ENCODE measurements at regions of chr18 and their contacts with region 1.

Region 1: DNA sequence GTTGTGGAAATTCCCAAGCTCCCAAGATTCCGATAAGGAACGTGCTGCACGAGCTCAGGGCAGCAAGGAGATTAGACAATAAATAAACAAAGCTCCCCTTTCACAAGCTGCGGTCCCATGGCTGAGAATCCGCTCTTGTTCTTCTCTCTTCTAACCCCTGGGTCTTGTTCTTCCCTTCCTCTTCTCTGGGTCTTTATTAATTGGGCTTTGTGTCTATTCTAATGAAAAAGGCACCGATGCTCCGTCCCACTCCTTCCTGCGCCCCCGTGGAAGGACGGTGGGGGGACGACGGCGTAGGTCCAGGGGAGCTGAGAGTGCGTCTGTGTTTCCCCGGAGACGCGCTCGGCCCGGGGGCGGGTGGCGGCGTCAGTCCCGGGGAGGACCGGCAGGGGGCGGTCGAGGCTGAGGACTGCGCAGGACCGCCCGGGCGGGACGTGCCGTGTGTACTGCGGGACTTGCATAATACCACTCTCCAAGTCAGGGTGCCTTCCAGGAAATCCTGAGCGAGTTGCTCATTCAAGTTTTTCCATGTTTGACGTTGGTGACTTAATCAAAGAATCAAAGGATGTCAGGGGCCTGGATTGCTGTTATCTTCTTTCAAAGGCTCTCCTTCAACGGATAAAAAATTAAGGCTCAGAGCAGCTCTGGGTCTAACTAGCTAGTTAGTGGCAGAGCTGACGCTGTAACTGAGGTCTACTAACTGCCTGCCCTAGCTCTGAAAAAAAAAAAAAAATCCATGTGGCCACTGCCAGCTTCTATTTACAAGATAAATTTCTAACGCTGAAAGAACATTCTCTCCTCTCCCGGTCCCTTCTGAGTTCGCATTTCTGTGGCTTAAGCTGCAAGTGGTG is 321.4 kb downstream of the TGIF1 start:
- DNase-seq: peak; percentile 83
- ATAC-seq: peak; percentile 100
- H3K4me3 Mint-ChIP-seq: peak overlapping the region; percentile 40
- H3K27ac Mint-ChIP-seq: peak overlapping the region; percentile 22
- H3K4me1 Mint-ChIP-seq: peaks cover 4% of the 10 kb centered on the region
- H3K27me3 Mint-ChIP-seq: peaks cover 44% of the 10 kb centered on the region

Region 2: GRCh38 chr18:3782901-3783300 is 11.6 kb after region 1 on chr18:
- CTCF ChIA-PET with region 1: interaction called, 18 read pairs
- DNase-seq: no peak
- ATAC-seq: no peak
- H3K4me3 Mint-ChIP-seq: no peak overlapping the region
- H3K27ac Mint-ChIP-seq: no peak overlapping the region
- H3K4me1 Mint-ChIP-seq: no peaks in the 10 kb centered on the region
- H3K27me3 Mint-ChIP-seq: peaks cover 7% of the 10 kb centered on the region

Region 3: GRCh38 chr18:3985664-3986063 is 214.3 kb after region 1 on chr18:
- CTCF ChIA-PET with region 1: interaction called, 15 read pairs
- DNase-seq: no peak
- ATAC-seq: no peak
- H3K4me3 Mint-ChIP-seq: no peak overlapping the region
- H3K27ac Mint-ChIP-seq: no peak overlapping the region
- H3K4me1 Mint-ChIP-seq: peaks cover 13% of the 10 kb centered on the region
- H3K27me3 Mint-ChIP-seq: no peaks in the 10 kb centered on the region

Region 4: GRCh38 chr18:3995476-3996102 is 224.2 kb after region 1 on chr18:
- CTCF ChIA-PET with region 1: interaction called, 49 read pairs
- DNase-seq: peak; percentile 67
- ATAC-seq: peak; percentile 42
- H3K4me3 Mint-ChIP-seq: no peak overlapping the region
- H3K27ac Mint-ChIP-seq: no peak overlapping the region
- H3K4me1 Mint-ChIP-seq: peaks cover 2% of the 10 kb centered on the region
- H3K27me3 Mint-ChIP-seq: peaks cover 13% of the 10 kb centered on the region

Region 5: DNA sequence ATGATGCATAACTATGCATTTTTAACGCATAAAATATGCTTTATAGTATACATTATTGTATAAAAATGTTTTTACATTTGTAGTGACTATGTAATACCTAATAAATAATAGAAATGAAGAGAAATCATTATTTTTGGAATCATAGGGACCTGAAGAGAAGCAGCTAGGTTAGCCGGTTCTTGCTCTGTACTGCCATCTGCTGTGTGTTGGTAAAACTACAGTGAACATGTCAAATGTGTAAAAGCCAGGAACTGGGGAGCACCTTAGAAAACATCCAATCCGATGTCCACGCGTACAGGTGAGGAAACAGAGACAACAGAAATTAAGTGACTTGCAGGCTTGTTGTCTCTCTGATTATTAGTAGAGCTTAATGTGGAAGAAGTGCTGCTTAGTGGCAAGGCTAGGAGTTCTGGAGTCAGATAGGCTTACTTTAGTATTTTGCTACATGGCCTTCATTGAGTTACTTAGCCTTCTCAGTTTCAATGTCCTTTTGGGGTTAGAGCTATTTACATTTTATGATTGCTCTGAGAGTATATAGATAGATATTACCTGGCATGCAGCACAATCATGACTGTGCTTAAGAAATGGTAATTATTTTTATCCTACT is 297.3 kb after region 1 on chr18:
- CTCF ChIA-PET with region 1: interaction called, 12 read pairs
- DNase-seq: peak; percentile 46
- ATAC-seq: no peak
- H3K4me3 Mint-ChIP-seq: no peak overlapping the region
- H3K27ac Mint-ChIP-seq: no peak overlapping the region
- H3K4me1 Mint-ChIP-seq: no peaks in the 10 kb centered on the region
- H3K27me3 Mint-ChIP-seq: peaks cover 3% of the 10 kb centered on the region

Measured in activated CD8-positive, alpha-beta memory T cell treated with anti-CD3 and anti-CD28 coated beads, Interleukin-2, amount 10 ng/mL, durations not matched to agents 7 days and 5 days (primary cell).